ENCODE measurements at regions of chr4 and their contacts with region 1.

Region 1: GRCh38 chr4:40238700-40239548 is 42.1 kb downstream of the RHOH start:
- DNase-seq: peak; percentile 79
- H3K4me3 Mint-ChIP-seq: peak overlapping the region; percentile 77
- H3K27ac Mint-ChIP-seq: peak overlapping the region; percentile 94
- H3K4me1 Mint-ChIP-seq: peaks cover 74% of the 10 kb centered on the region
- H3K27me3 Mint-ChIP-seq: no peaks in the 10 kb centered on the region

Region 2: GRCh38 chr4:40149960-40150385 is 89.0 kb before region 1 on chr4:
- intact Hi-C with region 1: loop called (anchors 5 kb)
- DNase-seq: peak; percentile 61
- H3K4me3 Mint-ChIP-seq: no peak overlapping the region
- H3K27ac Mint-ChIP-seq: peak overlapping the region; percentile 42
- H3K4me1 Mint-ChIP-seq: peaks cover 10% of the 10 kb centered on the region
- H3K27me3 Mint-ChIP-seq: no peaks in the 10 kb centered on the region

Region 3: GRCh38 chr4:40255393-40256281 is 16.7 kb after region 1 on chr4:
- intact Hi-C with region 1: loop called (anchors 2 kb)
- DNase-seq: no peak
- H3K4me3 Mint-ChIP-seq: peak overlapping the region; percentile 15
- H3K27ac Mint-ChIP-seq: peak overlapping the region; percentile 85
- H3K4me1 Mint-ChIP-seq: peaks cover 52% of the 10 kb centered on the region
- H3K27me3 Mint-ChIP-seq: no peaks in the 10 kb centered on the region

Region 4: DNA sequence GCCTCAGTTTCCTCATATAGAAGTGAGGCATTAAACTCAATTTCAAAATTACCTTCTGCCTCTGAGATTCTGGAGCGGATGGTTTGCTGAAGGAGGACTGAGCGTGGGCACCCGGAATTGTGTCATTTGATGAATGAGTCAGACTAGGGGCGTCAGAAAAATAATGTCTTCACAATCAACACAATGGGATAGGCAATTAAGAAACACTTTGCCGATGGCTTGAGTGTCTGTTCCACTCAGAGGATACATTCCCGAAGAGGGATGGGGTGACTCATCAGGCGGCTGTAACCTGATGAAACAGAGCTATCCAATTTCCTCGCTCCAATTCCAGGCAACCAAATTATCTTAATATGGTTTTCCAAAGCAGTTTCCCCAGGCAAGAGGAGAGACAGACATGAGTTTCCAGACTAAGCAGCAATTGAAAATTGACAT is 95.0 kb after region 1 on chr4:
- intact Hi-C with region 1: no loop called
- DNase-seq: no peak
- H3K4me3 Mint-ChIP-seq: no peak overlapping the region
- H3K27ac Mint-ChIP-seq: no peak overlapping the region
- H3K4me1 Mint-ChIP-seq: peaks cover 6% of the 10 kb centered on the region
- H3K27me3 Mint-ChIP-seq: peaks cover 19% of the 10 kb centered on the region

Measured in activated T-helper 2 cell treated with anti-CD3 and anti-CD28 coated beads, Interferon-gamma antibody, Interleukin-2, Interleukin-4, amounts not matched to agents 10 μg/mL and 5 μg/mL and 100 μg/mL, durations not matched to agents 14 hours and 24 hours and 36 hours (primary cell).